ENCODE measurements at regions of chr17 and their contacts with region 1.

Region 1: GRCh38 chr17:4908301-4908700 is 5.4 kb upstream of the CHRNE start:
- DNase-seq: no peak
- H3K4me3 ChIP-seq: no peak overlapping the region
- H3K27ac ChIP-seq: no peak overlapping the region
- H3K4me1 ChIP-seq: peaks cover 8 to 11% of the 10 kb centered on the region in 2 donors
- H3K27me3 ChIP-seq: no peaks in the 10 kb centered on the region
- CTCF ChIP-seq: no peak
- POLR2A ChIP-seq: no peak

Region 2: DNA sequence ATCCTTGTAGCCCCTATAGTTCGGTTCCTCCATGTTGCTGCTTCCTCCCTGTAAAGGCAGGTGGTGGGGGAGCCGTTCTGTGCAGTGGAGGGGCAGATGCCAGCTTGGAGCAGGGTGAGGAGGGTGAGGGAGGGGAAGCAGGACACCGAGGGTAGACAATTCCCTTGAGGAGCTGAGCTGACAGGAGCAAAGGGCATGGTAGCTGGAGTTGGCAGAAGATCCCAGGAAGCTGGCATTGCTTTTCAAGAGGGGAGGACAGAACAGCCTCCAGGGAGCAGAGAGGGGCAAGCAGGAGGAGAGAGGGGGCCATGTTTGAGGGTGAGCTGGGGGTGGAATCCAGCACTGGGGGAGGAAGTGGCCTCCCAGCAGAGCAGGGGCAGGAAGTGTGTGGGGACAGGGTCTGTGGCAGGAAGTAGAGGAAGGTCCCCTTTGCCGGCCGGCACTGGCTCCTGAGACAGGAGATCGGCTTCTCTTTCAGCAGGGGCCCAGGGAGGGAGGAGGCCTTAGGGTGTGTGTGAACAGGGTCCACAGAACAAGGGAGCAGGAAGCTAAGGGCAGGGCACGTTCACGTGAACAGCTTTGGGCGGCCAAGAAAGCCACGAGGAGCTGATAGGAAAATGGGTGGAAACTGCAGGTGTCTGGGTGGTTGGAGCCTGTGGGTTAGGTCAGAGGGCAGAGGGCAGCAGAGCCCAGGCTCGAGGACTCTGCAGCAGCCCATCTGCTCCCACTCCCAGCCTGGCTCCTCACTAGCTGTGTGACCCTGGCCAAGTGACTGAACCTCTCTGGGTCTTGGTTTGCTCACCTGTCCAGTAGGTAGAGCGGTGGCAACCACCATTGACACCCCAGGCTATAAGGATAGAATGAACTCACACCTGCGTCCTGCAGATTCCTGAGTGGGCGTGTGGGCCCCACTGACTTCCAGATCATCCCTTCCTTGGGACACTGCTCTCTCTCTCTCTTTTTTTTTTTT is 427.1 kb before region 1 on chr17:
- intact Hi-C with region 1: no loop called
- DNase-seq: no peak
- H3K4me3 ChIP-seq: no peak overlapping the region
- H3K27ac ChIP-seq: no peak overlapping the region
- H3K4me1 ChIP-seq: peaks cover 0 to 5% of the 10 kb centered on the region in 2 donors
- H3K27me3 ChIP-seq: no peaks in the 10 kb centered on the region
- CTCF ChIP-seq: no peak
- POLR2A ChIP-seq: no peak

Region 3: DNA sequence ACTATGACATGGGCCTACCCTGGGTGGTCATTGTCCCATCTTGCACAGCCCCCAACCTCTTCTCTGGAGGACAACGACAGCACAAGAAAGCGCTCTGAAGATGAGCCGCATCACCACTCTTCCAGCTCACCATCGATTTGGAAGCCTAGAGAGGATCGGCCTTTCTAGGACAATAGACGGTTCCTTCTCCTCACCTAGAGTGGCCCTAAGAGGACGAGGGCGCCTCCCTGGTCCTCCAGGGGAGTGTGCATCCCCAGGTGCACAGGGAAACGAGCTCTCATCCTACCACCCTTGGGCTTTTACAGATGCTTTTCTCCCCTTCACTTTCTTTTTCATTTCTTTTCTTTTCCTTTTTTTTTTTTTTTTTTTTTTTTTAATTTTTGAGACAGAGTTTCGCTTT is 147.2 kb after region 1 on chr17:
- intact Hi-C with region 1: loop called (anchors 5 kb)
- DNase-seq: no peak
- H3K4me3 ChIP-seq: no peak overlapping the region
- H3K27ac ChIP-seq: no peak overlapping the region
- H3K4me1 ChIP-seq: no peaks in the 10 kb centered on the region
- H3K27me3 ChIP-seq: no peaks in the 10 kb centered on the region
- CTCF ChIP-seq: no peak
- POLR2A ChIP-seq: no peak

Measured in thyroid gland (tissue), 4 donors.